ENCODE measurements at regions of chr2 and their contacts with region 1.

Region 1: DNA sequence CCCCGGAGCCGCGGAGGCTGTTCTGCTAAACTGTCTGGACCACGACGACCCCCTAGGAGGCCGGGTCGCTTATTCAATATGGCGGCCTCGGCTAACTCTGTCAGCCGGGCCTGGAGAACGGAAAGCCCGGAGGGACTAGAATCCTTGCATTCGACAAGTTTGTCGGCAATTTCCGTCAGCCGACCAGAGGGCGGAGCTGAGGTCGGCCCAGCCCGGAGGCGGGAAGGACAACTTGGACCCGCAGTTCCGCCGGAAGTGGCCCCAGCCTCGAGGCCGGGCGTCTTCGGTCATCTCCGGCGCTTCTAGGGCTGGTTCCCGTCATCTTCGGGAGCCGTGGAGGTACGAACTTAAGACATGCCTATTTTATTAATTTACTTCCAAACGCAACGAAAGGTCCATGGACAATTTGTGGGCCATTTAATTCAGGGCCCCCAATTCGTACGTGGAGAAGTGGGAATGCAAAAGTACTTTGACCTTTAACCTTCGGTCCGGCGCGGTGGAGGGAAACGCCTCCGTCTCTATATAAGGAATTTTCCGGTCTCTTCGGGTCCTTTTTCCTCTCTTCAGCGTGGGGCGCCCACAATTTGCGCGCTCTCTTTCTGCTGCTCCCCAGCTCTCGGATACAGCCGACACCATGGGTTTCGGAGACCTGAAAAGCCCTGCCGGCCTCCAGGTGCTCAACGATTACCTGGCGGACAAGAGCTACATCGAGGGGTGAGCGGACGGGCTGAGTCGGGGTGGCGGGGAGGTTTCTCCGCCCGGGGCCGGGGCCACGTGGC is at the starts of genes EEF1B2 and NDUFS1:
- DNase-seq: peak; percentile 97 to 99
- H3K4me3 ChIP-seq: peak within 1 kb of the TSS; percentile 86 to 88
- H3K27ac ChIP-seq: peak within 1 kb of the TSS; percentile 94
- H3K4me1 ChIP-seq: peaks cover 38% of the 10 kb centered on the region
- H3K27me3 ChIP-seq: no peaks in the 10 kb centered on the region
- CTCF ChIP-seq: no peak
- POLR2A ChIP-seq: peak in 1 of 2 donors; percentile 31
- total RNA-seq, gene EEF1B2: 353 TPM
- total RNA-seq, gene NDUFS1: 33.6 TPM

Region 2: GRCh38 chr2:206084870-206085741 is 74.4 kb before region 1 on chr2:
- intact Hi-C with region 1: loop called (anchors 5 kb)
- DNase-seq: no peak
- H3K4me3 ChIP-seq: peak overlapping the region; percentile 81 to 88
- H3K27ac ChIP-seq: peak overlapping the region; percentile 99
- H3K4me1 ChIP-seq: peaks cover 37% of the 10 kb centered on the region
- H3K27me3 ChIP-seq: no peaks in the 10 kb centered on the region
- CTCF ChIP-seq: no peak
- POLR2A ChIP-seq: no peak

Measured in vagina (tissue), 2 donors.